Calu3 (cell line): ENCODE measurements at regions of chr2 and their contacts with region 1.

Region 1: DNA sequence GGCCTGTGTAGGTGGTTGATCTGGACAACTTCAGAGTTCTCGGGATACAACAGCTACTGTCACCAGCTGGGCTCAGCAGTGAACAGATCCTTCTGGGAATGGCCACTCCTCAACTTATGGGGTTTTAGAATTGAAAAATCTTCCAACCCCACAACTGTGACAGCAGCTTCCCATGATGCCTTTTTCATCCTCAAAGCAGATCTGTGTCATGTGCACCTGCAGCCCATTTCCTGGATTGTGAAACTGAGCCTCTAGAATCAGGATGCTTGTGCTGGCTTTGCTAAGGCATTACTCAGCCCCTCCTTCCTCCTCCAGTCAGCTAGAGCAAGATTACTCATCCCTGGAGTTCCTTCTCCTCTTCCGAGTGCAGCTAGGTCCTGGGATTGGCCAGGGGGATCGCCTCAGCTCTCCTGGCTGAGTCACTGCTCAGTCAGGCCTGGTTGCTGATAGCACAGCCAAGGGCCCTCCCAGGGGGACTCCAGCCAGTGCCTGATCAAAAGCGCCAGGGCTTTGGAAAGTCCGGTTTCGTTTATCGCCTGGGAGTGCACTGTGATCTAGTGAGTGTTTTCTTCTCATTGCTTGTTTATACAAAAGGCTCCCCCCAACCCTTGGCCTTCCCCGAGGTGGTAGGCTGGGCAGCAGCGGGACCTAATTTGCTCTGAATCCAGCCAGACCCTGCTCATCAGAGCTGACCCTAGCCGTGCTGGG is 2.4 kb upstream of the LPIN1 start:
- DNase-seq: peak; percentile 96
- H3K4me3 Mint-ChIP-seq: peak overlapping the region; percentile 43
- H3K27ac Mint-ChIP-seq: peak overlapping the region; percentile 89
- H3K4me1 Mint-ChIP-seq: peaks cover 66% of the 10 kb centered on the region
- H3K27me3 Mint-ChIP-seq: no peaks in the 10 kb centered on the region
- CTCF ChIP-seq: no peak

Region 2: DNA sequence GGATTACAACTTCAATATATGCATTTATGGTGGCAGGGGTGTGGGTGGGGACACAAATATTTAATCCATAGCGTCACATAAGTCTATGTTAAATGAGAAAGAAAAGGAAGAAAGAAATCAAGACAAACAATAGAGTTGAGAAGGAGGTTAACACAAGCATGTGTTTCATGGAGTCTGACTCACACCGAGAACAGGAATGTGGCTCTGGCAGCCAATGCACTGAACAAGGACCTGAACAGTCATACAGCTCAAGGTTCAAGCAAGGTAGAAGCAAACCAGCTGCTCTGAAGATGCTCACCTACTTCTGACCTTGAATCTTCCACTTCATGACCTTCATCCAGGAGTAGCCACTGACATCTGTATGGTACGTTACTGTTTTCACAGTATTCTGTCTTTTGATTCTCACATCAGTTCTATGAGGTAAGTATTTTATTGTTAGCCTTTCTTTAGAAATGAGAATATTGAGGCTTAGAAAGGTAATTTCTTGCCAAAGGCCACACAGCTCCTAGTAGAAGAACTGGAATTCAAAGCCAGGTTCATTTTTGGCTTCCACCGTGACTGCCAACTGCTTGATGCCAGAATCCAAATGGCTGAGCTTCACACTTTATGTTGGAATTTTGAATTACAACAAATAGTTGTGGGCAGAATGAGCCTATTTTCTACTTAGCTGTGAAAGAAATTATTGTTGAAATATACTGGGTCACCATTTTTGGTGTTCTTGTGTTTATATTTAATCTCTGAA is 33.6 kb before region 1 on chr2:
- CTCF ChIA-PET with region 1: interaction called, 11 read pairs
- intact Hi-C with region 1: loop called (anchors 2 kb)
- DNase-seq: peak; percentile 58
- H3K4me3 Mint-ChIP-seq: no peak overlapping the region
- H3K27ac Mint-ChIP-seq: peak overlapping the region; percentile 15
- H3K4me1 Mint-ChIP-seq: peaks cover 45% of the 10 kb centered on the region
- H3K27me3 Mint-ChIP-seq: no peaks in the 10 kb centered on the region
- CTCF ChIP-seq: no peak